ENCODE measurements at regions of chr17 and their contacts with region 1.

Region 1: DNA sequence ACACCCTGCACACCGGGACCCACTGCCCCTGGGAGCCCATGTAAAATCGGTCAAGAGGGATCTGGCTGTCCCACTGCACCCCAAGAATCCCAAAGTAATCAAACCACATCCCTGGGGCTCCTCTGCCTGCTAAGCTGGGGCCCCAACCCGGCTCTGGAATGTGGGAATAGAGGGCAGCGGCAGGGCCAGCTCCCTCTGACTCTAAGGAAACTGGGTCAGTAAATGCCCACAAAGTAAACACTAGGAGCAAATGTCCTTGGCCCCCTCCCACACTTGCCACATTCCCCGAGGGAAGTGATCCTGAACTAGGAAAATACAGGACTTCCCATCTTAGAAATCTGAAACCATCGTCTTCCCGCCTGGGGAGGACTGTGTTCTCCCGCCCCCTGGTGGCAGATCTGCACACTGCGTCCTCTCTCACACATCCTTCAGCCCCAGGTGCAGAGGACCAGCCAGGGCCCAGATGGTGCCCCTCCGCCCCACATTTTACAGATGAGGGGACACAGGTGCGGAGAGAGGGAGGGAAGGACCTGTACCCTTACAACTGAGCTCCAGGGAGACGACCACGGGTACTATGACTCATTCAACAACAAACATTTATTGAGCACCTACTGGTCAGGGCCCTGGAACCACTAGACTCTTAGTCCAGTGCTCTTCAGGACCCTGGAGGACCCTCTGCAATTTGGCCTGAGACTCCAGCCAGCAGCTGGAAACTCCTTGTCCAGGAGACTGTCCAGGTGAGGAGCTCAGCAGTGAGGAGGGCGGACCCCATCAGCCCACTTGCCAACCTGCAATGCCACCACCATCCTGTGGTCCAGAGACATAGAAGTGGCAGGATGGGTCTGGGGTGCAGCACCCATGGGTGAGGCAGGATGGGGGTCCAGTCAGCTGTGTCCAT is 10.1 kb downstream of the P3H4 start:
- DNase-seq: peak; percentile 63 to 91 (median 80)
- H3K4me3 ChIP-seq: no peak overlapping the region
- H3K27ac ChIP-seq: peak overlapping the region in 1 of 5 donors; percentile 40
- H3K4me1 ChIP-seq: peaks cover 0 to 9% of the 10 kb centered on the region in 2 donors
- H3K27me3 ChIP-seq: no peaks in the 10 kb centered on the region
- CTCF ChIP-seq: peak; percentile 88 to 98 (median 96)
- POLR2A ChIP-seq: no peak

Region 2: DNA sequence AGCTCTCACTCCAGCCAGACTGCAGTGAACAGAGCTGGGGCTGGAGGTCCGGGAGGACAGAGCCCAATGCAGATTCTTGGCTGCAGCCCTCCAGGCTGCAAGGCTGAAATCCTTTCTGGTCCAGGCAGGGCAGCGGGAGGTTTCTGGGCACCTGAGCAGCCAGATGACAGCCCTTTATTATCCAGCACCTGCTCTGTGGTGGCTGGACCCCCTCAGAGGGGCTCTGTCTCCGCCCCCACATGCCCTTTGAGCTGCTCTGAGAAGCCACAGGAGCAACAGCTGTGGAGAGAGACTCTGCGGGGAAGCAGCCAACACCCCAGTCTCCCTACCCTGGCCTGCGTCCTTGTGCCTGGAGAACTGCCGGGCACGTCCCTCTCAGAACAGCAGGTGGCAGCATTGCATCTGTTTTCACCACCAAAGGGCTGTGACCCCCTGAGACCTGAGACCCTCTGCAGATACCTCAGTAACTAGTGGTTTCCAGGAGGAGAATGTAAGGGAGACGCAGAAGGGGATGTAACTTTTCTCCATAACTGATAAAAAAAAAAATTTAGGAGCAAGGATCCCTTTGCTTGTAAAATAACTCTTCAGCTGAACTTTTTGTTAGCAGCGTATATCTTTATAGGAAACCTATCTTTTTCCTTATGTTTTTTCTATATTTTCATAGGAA is 161.3 kb after region 1 on chr17:
- intact Hi-C with region 1: loop called in 1 of 2 experiments (anchors 10 kb)
- DNase-seq: peak; percentile 63 to 89 (median 78)
- H3K4me3 ChIP-seq: no peak overlapping the region
- H3K27ac ChIP-seq: no peak overlapping the region
- H3K4me1 ChIP-seq: peaks cover 13 to 20% of the 10 kb centered on the region in 2 donors
- H3K27me3 ChIP-seq: no peaks in the 10 kb centered on the region
- CTCF ChIP-seq: peak; percentile 73 to 94 (median 87)
- POLR2A ChIP-seq: no peak

Measured in adrenal gland (tissue), 19 donors.